Pancreas (tissue), 10 donors: ENCODE measurements at regions of chr6 and their contacts with region 1.

Region 1: DNA sequence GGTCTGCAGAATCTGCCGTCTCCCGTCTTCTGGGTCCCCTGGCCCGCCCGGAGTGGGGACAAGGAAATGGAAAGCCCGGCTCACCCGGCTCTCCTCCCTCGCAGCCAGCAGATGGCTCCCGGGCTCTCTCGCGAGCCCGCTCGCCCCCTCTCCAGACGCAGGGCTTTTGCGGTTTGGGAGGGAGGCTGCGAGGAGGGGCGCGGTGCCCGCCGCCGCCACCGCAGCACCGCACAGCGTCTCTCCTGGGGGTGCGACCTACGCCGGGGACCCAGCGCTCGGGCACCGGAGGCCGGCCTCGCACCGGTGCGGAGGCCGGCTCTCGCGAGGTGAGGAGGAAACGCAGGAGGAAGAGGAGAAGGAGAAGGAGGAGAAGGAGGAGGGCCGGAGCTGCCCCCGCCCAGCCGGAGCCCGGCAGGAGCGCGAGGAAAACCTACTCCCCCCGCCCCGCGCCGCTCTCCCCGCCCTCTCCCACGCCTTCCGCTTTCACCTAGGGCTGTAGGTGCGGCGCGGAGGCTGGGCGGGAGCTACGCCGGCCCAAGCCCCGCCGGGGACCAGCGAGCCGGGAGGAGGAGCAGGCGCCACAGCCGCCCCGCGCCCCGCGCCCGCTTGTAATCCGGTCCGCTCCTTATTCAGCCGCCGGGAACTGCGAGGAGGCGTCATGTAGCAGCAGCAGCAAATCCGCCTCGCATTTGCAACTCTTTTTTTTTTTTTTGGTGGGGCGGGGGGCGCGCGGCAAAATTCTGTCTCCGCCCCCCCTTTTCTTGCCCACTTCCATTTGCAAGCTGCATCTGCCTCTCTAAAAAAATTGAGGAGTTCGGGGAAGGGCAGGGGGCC is at the start of gene CARMIL1:
- DNase-seq: peak; percentile 88 to 94 (median 93)
- ATAC-seq: peak; percentile 90 to 94 (median 93)
- H3K4me3 ChIP-seq: peak within 1 kb of the TSS; percentile 59 to 94 (median 74)
- H3K27ac ChIP-seq: peak within 1 kb of the TSS; percentile 59 to 83 (median 72)
- H3K4me1 ChIP-seq: peaks cover 4 to 11% (median 11%) of the 10 kb centered on the region in 3 donors
- H3K27me3 ChIP-seq: no peaks in the 10 kb centered on the region
- CTCF ChIP-seq: peak; percentile 21 to 57 (median 28)
- total RNA-seq, gene CARMIL1: 6.3 to 9.4 (median 7.8) TPM

Region 2: GRCh38 chr6:25156096-25156495 is 123.0 kb before region 1 on chr6:
- intact Hi-C with region 1: no loop called
- DNase-seq: no peak
- ATAC-seq: no peak
- H3K4me3 ChIP-seq: no peak overlapping the region
- H3K27ac ChIP-seq: no peak overlapping the region
- H3K4me1 ChIP-seq: peaks cover 0 to 9% (median 0%) of the 10 kb centered on the region in 3 donors
- H3K27me3 ChIP-seq: no peaks in the 10 kb centered on the region
- CTCF ChIP-seq: no peak

Region 3: DNA sequence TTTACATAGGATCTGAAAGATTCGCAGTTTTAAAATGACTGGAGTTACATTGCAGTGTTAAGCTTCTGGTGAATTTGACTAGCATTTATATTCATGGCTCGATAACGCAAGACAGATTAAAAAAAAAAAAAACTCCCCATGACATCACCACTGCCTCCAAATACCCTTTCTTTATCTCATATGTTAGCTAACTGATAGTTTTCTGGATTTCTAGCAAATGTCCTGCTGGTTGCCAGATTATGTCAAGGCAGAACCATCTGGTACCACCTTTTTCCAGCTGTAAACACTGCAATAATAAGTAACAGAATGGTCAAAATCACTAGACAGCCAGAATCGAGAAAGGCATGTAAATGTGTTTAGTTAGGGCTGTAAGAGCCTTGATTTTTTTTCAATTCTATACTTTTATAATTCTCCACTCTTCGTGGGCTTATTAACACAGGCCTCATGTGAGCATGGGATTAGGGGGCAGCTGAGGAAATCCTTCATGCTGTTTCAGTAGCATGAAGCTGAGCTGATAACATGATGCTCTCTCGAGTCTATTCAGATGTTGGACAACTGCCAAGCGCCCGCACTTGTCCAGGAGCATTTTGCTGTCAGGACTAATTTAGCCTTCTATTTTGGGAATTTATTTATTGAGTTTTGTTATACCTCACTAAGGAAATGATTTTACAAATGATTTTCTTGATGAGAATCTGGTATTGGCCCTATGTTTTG is 206.8 kb after region 1 on chr6:
- intact Hi-C with region 1: loop called in 1 of 3 experiments (anchors 10 kb)
- DNase-seq: peak in 3 of 6 donors; percentile 17 to 62 (median 41)
- ATAC-seq: peak; percentile 28 to 49 (median 44)
- H3K4me3 ChIP-seq: no peak overlapping the region
- H3K27ac ChIP-seq: no peak overlapping the region
- H3K4me1 ChIP-seq: peaks cover 6 to 23% (median 8%) of the 10 kb centered on the region in 3 donors
- H3K27me3 ChIP-seq: no peaks in the 10 kb centered on the region
- CTCF ChIP-seq: no peak

Region 4: GRCh38 chr6:25499615-25500235 is 220.6 kb after region 1 on chr6:
- intact Hi-C with region 1: loop called in 1 of 3 experiments (anchors 5 kb)
- DNase-seq: no peak
- ATAC-seq: no peak
- H3K4me3 ChIP-seq: no peak overlapping the region
- H3K27ac ChIP-seq: no peak overlapping the region
- H3K4me1 ChIP-seq: no peaks in the 10 kb centered on the region
- H3K27me3 ChIP-seq: no peaks in the 10 kb centered on the region
- CTCF ChIP-seq: no peak